Right cardiac atrium (tissue), 5 donors: ENCODE measurements at regions of chr11 and their contacts with region 1.

Region 1: GRCh38 chr11:107770551-107770951 is 58.7 kb upstream of the SLN start:
- DNase-seq: no peak
- ATAC-seq: no peak
- H3K4me3 ChIP-seq: no peak overlapping the region
- H3K27ac ChIP-seq: no peak overlapping the region
- H3K4me1 ChIP-seq: no peaks in the 10 kb centered on the region
- H3K27me3 ChIP-seq: no peaks in the 10 kb centered on the region

Region 2: DNA sequence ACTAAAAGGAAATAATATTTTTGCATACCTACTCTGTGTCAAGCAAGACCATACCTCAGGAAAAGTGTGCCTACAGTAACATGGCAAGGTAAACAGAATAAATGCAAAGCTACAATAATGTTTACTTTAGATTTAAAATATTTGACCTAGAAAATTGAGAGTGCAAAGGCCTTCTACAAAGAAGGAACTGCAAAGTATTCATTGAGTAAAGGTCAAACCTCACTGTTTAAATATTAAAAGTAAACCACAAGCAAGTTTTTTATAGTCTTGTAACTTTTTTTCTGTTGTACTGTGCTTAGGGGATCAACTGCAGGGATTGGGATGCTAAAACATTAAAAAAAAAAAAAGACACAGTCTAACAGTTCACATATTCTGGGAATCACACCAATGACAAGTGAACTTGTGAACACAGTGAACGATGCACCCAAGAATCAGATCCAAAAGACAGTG is 361.8 kb before region 1 on chr11:
- intact Hi-C with region 1: no loop called
- DNase-seq: no peak
- ATAC-seq: no peak
- H3K4me3 ChIP-seq: no peak overlapping the region
- H3K27ac ChIP-seq: no peak overlapping the region
- H3K4me1 ChIP-seq: no peaks in the 10 kb centered on the region
- H3K27me3 ChIP-seq: no peaks in the 10 kb centered on the region

Region 3: DNA sequence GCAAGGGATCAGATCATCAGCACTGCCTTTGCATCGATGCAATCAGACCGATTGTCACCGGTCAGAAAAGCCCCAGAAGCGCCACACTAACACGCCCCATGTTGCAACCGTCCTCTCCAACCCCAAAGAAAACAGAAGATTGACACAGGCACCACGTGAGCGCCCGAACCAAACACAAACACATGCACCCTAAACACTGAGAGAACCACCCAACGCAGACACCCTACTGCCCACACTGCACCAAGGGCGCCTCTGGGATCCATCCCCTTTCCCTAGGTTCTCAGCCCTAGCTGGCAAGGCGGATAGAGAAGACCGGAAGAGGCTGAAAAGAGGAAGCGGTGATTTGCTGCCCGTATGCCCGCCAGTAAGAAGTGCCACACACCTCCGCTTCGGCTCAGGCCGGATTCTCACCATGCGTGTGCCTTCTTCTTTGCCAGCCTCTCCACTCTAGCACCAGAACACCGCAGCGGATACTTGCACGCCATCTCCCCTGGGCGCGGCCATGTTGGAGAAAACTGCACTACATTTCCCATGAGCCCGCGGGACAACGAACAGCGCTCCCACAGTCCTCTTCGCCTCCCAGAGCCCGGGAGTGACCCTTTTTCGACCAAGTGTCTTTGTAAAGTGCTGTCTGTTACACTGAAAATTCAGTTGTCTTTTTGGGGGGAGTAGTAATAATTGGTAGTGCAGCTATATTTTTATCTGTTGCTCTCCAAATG is 205.2 kb before region 1 on chr11 and contains the start of gene ALKBH8:
- intact Hi-C with region 1: loop called in 3 of 4 experiments (anchors 10 kb)
- DNase-seq: peak; percentile 76 to 90 (median 86)
- ATAC-seq: peak; percentile 97 to 98
- H3K4me3 ChIP-seq: peak within 1 kb of the TSS; percentile 79
- H3K27ac ChIP-seq: peak within 1 kb of the TSS; percentile 89
- H3K4me1 ChIP-seq: peaks cover 3% of the 10 kb centered on the region
- H3K27me3 ChIP-seq: no peaks in the 10 kb centered on the region
- total RNA-seq, gene ALKBH8: 6.3 to 8.3 (median 7.4) TPM

Region 4: DNA sequence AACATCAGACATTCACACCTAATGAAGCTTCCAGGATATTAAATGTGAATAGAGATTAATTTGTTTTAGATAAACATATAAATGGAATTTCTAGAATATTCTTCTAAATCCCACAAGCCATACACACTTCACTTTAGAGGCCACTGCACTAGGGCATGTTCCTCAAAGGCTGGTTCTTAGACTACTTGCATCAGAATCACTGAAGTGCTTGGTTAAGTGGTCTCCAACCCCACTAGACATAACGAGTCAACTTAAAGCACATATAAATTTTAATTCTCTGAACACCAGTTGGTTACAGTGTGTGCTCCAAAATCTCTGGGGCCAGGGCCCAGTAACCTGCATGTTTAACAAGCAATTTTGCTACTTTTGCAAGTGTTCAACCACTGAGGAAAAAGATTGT is 197.1 kb before region 1 on chr11:
- intact Hi-C with region 1: loop called (anchors 5 to 10 kb)
- DNase-seq: no peak
- ATAC-seq: no peak
- H3K4me3 ChIP-seq: no peak overlapping the region
- H3K27ac ChIP-seq: no peak overlapping the region
- H3K4me1 ChIP-seq: no peaks in the 10 kb centered on the region
- H3K27me3 ChIP-seq: no peaks in the 10 kb centered on the region

Region 5: GRCh38 chr11:107689317-107690202 is 81.0 kb before region 1 on chr11:
- intact Hi-C with region 1: loop called in 2 of 4 experiments (anchors 5 kb)
- DNase-seq: peak; percentile 61 to 88 (median 67)
- ATAC-seq: peak; percentile 88 to 91
- H3K4me3 ChIP-seq: no peak overlapping the region
- H3K27ac ChIP-seq: no peak overlapping the region
- H3K4me1 ChIP-seq: peaks cover 1% of the 10 kb centered on the region
- H3K27me3 ChIP-seq: no peaks in the 10 kb centered on the region